PC-9 (cell line): ENCODE measurements at regions of chr1 and their contacts with region 1.

Region 1: GRCh38 chr1:181021811-181022434 is 747 bp downstream of the STX6 start:
- DNase-seq: peak; percentile 54 to 64
- H3K4me3 ChIP-seq: peak overlapping the region; percentile 63
- H3K27ac ChIP-seq: peak overlapping the region; percentile 62
- H3K4me1 ChIP-seq: peaks cover 18% of the 10 kb centered on the region
- H3K27me3 ChIP-seq: no peaks in the 10 kb centered on the region
- CTCF ChIP-seq: no peak

Region 2: GRCh38 chr1:179984942-179985341 is 1037.0 kb before region 1 on chr1:
- CTCF ChIA-PET with region 1: no interaction called
- POLR2A ChIA-PET with region 1: interaction called, 11 read pairs
- intact Hi-C with region 1: no loop called
- DNase-seq: no peak
- H3K4me3 ChIP-seq: no peak overlapping the region
- H3K27ac ChIP-seq: no peak overlapping the region
- H3K4me1 ChIP-seq: no peaks in the 10 kb centered on the region
- H3K27me3 ChIP-seq: no peaks in the 10 kb centered on the region
- CTCF ChIP-seq: no peak

Region 3: GRCh38 chr1:180893614-180894013 is 128.3 kb before region 1 on chr1:
- CTCF ChIA-PET with region 1: no interaction called
- POLR2A ChIA-PET with region 1: no interaction called
- intact Hi-C with region 1: loop called (anchors 5 kb)
- DNase-seq: no peak
- H3K4me3 ChIP-seq: no peak overlapping the region
- H3K27ac ChIP-seq: no peak overlapping the region
- H3K4me1 ChIP-seq: no peaks in the 10 kb centered on the region
- H3K27me3 ChIP-seq: no peaks in the 10 kb centered on the region
- CTCF ChIP-seq: no peak

Region 4: GRCh38 chr1:181159451-181160140 is 137.7 kb after region 1 on chr1:
- CTCF ChIA-PET with region 1: no interaction called
- POLR2A ChIA-PET with region 1: no interaction called
- intact Hi-C with region 1: loop called (anchors 5 kb)
- DNase-seq: peak; percentile 59 to 66
- H3K4me3 ChIP-seq: no peak overlapping the region
- H3K27ac ChIP-seq: no peak overlapping the region
- H3K4me1 ChIP-seq: peaks cover 11% of the 10 kb centered on the region; the same call in 1 of the 2 replicates
- H3K27me3 ChIP-seq: no peaks in the 10 kb centered on the region
- CTCF ChIP-seq: no peak